HEK293 (cell line): ENCODE measurements at regions of chr11 and their contacts with region 1.

Region 1: GRCh38 chr11:554824-555472 is 5.6 kb downstream of the LMNTD2 start:
- H3K4me3 ChIP-seq: peak overlapping the region; percentile 44
- H3K27ac ChIP-seq: no peak overlapping the region; the same call in 1 of the 2 replicates
- H3K4me1 ChIP-seq: no peaks in the 10 kb centered on the region
- CTCF ChIP-seq: no peak

Region 2: GRCh38 chr11:456533-456932 is 98.4 kb before region 1 on chr11:
- CTCF ChIA-PET with region 1: no interaction called
- POLR2A ChIA-PET with region 1: no interaction called
- H3K4me3 ChIP-seq: no peak overlapping the region
- H3K27ac ChIP-seq: no peak overlapping the region
- H3K4me1 ChIP-seq: no peaks in the 10 kb centered on the region
- CTCF ChIP-seq: no peak

Region 3: GRCh38 chr11:469684-470560 is 85.0 kb before region 1 on chr11:
- CTCF ChIA-PET with region 1: no interaction called
- POLR2A ChIA-PET with region 1: no interaction called
- H3K4me3 ChIP-seq: no peak overlapping the region
- H3K27ac ChIP-seq: no peak overlapping the region; the same call in 1 of the 2 replicates
- H3K4me1 ChIP-seq: peaks cover 3% of the 10 kb centered on the region; the same call in 1 of the 2 replicates
- CTCF ChIP-seq: no peak

Region 4: DNA sequence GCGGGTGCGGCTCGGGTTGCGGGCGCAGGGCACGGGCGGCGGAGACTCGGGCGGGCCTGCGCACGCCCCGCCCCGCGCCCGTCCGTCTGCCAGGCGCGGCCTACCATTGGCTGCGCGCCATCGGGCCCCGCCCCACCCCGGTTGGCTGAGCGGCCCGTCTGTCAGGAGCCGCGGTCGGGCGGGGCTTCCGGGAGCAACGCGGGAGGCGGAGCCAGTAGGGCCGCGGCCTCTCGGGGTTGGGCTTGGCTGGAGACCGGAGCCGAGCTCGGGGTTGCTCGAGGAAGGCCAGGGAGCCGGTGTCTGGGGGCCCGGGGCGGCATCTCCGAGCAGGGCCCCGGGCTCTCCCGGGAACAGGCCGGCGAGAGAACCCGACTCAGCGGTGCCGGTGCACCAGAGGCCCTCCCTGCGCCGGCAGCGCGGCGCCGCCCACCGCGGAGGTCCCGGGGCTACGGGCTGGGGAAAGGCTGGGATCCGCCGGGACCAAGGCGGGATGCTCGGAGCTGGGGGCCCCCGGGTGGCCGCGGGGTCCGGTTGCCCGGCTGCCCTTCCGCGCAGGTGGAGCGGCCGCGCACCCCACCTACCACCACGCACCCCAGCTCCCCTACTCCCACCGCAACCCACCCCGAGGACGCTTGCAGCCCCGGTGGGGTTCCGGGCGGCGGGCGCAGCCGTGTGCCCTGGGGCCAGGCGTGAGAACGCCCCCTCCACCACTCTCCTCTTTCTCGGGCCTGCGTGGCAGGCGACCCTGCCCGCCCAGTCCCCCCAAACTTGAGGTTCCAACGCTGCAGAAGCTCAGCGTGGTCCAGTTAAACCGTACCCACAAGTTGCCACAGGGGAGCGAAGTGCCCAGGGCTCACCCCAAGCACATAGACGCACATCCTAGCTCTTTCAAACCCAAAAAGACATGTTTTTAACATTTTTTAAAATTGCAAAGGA is 19.2 kb before region 1 on chr11 and contains the start of gene HRAS:
- CTCF ChIA-PET with region 1: interaction called, 3 read pairs
- POLR2A ChIA-PET with region 1: interaction called, 10 read pairs
- H3K4me3 ChIP-seq: peak within 1 kb of the TSS; percentile 72
- H3K27ac ChIP-seq: peak within 1 kb of the TSS; percentile 83
- H3K4me1 ChIP-seq: no peaks in the 10 kb centered on the region
- CTCF ChIP-seq: no peak

Region 5: DNA sequence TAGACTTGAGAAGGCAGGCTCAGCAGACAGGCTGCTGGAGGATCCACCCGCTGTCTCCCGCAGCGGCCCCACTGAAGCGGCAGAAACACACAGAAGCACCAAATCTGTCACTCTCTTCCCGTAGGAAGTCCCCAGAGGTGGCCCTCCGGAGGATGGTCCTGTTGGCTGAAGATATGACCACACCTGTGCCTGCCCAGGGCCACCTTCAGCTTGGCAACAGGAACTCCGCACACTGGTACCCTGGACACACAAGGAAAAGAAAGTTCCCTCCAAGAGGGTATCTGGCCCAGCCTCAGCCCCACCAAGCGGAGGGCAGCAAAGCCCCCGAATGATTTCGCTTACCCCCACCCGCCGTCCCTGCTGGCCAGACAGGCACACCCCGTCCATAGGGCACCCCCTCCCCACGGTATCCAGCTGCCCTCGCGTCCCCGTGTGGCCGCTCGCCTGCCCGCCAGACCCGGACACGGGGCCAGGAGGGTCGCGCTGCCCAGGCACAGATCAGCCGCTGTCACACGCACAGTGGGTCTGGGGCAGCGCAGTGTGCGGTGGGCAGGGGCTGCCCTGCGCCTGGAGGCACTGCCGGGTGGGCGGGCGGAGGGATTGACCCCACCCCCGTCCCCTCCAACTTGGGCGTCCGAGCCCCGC is 12.8 kb after region 1 on chr11:
- CTCF ChIA-PET with region 1: interaction called, 11 read pairs
- POLR2A ChIA-PET with region 1: interaction called, 4 read pairs
- H3K4me3 ChIP-seq: peak overlapping the region; percentile 57
- H3K27ac ChIP-seq: no peak overlapping the region; the same call in 1 of the 2 replicates
- H3K4me1 ChIP-seq: no peaks in the 10 kb centered on the region
- CTCF ChIP-seq: no peak

Region 6: GRCh38 chr11:688681-689080 is 133.7 kb after region 1 on chr11:
- CTCF ChIA-PET with region 1: no interaction called
- POLR2A ChIA-PET with region 1: no interaction called
- H3K4me3 ChIP-seq: no peak overlapping the region
- H3K27ac ChIP-seq: no peak overlapping the region
- H3K4me1 ChIP-seq: no peaks in the 10 kb centered on the region
- CTCF ChIP-seq: no peak

Region 7: DNA sequence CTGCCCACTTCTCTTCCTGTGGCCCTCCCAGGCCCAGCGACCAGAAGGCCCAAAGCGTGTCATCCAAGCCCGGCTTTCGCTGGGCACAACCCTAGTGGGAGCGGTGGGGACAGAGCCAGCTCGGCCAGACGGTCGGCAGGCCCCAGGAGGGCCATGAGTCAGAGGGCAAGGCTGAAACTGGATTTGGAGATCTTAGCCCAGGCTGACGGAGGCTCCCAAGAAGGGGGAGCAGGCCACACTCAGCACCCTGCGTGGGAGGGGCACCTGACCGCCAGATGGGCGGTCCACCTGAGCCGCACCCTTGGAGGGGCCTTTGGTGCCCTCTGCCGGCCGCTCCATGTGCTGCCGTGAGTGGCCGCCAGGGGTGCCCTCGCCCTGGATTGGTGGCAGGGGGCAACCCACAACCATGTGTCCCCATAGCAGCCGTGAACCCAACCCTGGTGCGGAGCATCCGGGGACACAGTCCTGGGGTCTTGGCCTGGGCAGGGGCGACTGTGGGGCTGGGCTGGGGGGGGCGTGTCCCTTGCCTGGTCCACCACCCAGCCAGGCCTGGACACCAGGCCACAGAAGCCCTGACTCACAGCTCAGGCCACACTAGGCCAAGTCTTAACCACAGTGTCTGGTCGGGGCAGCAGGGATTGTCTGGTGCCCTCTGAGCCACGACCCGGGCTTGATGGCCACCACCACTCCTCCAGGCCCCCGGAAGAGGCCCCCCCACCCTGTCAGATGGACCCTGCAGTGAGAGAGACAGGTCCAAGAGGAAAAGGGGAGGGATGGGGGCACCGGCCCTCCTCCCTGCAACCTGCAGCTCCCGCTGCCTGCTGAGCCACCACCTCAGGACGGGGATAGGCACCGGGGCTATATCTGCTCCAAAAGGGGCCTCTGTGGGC is 173.2 kb after region 1 on chr11:
- CTCF ChIA-PET with region 1: interaction called, 17 read pairs
- POLR2A ChIA-PET with region 1: interaction called, 4 read pairs
- H3K4me3 ChIP-seq: no peak overlapping the region
- H3K27ac ChIP-seq: no peak overlapping the region
- H3K4me1 ChIP-seq: no peaks in the 10 kb centered on the region; the same call in 1 of the 2 replicates
- CTCF ChIP-seq: peak; percentile 97

Region 8: DNA sequence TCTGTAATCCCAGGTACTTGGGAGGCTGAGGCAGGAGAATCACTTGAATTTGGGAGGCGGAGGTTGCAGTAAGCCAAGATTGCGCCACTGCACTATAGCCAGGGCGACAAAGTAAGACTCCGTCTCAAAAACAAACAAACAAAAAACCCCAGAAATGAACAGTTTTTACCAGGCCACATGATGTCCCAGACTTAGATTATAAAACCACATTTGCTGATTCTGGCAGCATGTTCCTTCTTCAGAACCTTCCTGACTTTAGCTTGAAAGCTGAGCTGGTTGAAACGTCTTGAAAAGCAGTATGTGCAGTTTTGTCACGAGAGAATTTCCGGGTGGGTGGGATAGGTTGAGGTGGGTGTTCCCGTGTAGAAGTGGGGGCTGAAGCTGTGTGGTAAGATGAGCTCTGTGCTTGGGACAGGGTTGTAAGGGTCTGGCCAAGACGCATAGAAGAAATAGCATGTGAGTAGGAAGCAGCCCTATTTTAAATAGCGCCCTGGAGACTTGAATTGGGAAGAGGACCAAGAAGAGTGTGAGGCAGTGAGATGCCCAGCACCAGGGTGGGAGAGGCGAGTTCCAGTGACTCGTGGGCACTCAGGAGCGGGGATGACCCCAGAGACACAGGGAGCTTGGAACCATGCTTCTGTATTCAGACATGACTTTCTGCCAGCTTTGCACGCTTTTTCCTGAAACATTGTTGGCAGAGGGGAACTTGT is 378.3 kb after region 1 on chr11:
- CTCF ChIA-PET with region 1: no interaction called
- POLR2A ChIA-PET with region 1: no interaction called
- H3K4me3 ChIP-seq: no peak overlapping the region
- H3K27ac ChIP-seq: no peak overlapping the region
- H3K4me1 ChIP-seq: no peaks in the 10 kb centered on the region
- CTCF ChIP-seq: no peak